Activated T-helper 1 cell treated with anti-CD3 and anti-CD28 coated beads, Interleukin-12 subunit alpha, Interleukin-12 subunit beta, Interleukin-2, Interleukin-4 antibody, amounts not matched to agents 30 ng/mL and 10 ng/mL and 1 ng/mL, durations not matched to agents 14 hours and 24 hours and 36 hours (primary cell): ENCODE measurements at regions of chr21 and their contacts with region 1.

Region 1: DNA sequence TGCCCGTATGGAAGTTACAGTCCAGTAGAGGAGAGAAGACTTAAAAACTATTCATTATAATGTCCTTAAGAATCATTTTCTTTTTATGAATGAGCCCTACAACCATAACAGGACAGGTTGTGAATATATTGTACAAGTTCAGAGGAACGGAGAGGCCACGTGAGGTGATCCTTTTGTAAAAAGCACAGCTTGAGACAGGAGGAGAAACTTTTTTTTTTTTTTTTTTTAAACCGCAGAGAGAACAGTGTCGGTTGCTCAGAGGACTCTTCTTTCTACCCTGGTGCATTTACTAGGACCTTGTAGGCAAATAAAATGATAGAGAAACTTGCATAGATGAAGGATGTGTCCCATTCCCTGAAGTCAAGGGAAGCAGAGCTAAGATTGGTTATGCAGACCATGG is 32.1 kb downstream of the DYRK1A start:
- DNase-seq: no peak
- H3K4me3 Mint-ChIP-seq: peak overlapping the region; percentile 15
- H3K27ac Mint-ChIP-seq: no peak overlapping the region
- H3K4me1 Mint-ChIP-seq: peaks cover 64% of the 10 kb centered on the region
- H3K27me3 Mint-ChIP-seq: no peaks in the 10 kb centered on the region

Region 2: GRCh38 chr21:37366482-37367316 is 32.0 kb before region 1 on chr21 and contains the start of gene DYRK1A:
- intact Hi-C with region 1: no loop called
- DNase-seq: peak; percentile 97
- H3K4me3 Mint-ChIP-seq: peak within 1 kb of the TSS; percentile 98
- H3K27ac Mint-ChIP-seq: peak within 1 kb of the TSS; percentile 99
- H3K4me1 Mint-ChIP-seq: peaks cover 44% of the 10 kb centered on the region
- H3K27me3 Mint-ChIP-seq: peaks cover 2% of the 10 kb centered on the region
- total RNA-seq, gene DYRK1A: 66.5 and 68.1 TPM in 2 replicates

Region 3: GRCh38 chr21:37385261-37385660 is 13.4 kb before region 1 on chr21:
- intact Hi-C with region 1: loop called (anchors 2 kb)
- DNase-seq: no peak
- H3K4me3 Mint-ChIP-seq: no peak overlapping the region
- H3K27ac Mint-ChIP-seq: no peak overlapping the region
- H3K4me1 Mint-ChIP-seq: peaks cover 70% of the 10 kb centered on the region
- H3K27me3 Mint-ChIP-seq: no peaks in the 10 kb centered on the region

Region 4: GRCh38 chr21:37435120-37435519 is 36.4 kb after region 1 on chr21:
- intact Hi-C with region 1: loop called (anchors 5 kb)
- DNase-seq: peak; percentile 50
- H3K4me3 Mint-ChIP-seq: no peak overlapping the region
- H3K27ac Mint-ChIP-seq: no peak overlapping the region
- H3K4me1 Mint-ChIP-seq: peaks cover 45% of the 10 kb centered on the region
- H3K27me3 Mint-ChIP-seq: no peaks in the 10 kb centered on the region